H1 (cell line): ENCODE measurements at regions of chr10 and their contacts with region 1.

Region 1: GRCh38 chr10:97278491-97278989 is 13.9 kb downstream of the ARHGAP19 start:
- DNase-seq: no peak
- H3K4me3 ChIP-seq: no peak overlapping the region
- H3K27ac ChIP-seq: no peak overlapping the region
- H3K4me1 ChIP-seq: no peaks in the 10 kb centered on the region
- H3K27me3 ChIP-seq: no peaks in the 10 kb centered on the region
- CTCF ChIP-seq: peak in 1 of 3 experiments; percentile 37; a peak in 2 of 4 replicates
- EP300 ChIP-seq: no peak
- POLR2A ChIP-seq: no peak
- RAD21 ChIP-seq: peak; percentile 40 to 43

Region 2: GRCh38 chr10:96960872-96961271 is 317.7 kb before region 1 on chr10:
- CTCF ChIA-PET with region 1: no interaction called
- POLR2A ChIA-PET with region 1: no interaction called
- DNase-seq: no peak
- H3K4me3 ChIP-seq: no peak overlapping the region
- H3K27ac ChIP-seq: no peak overlapping the region
- H3K4me1 ChIP-seq: no peaks in the 10 kb centered on the region
- H3K27me3 ChIP-seq: no peaks in the 10 kb centered on the region
- CTCF ChIP-seq: no peak
- EP300 ChIP-seq: no peak
- POLR2A ChIP-seq: no peak
- RAD21 ChIP-seq: no peak

Region 3: DNA sequence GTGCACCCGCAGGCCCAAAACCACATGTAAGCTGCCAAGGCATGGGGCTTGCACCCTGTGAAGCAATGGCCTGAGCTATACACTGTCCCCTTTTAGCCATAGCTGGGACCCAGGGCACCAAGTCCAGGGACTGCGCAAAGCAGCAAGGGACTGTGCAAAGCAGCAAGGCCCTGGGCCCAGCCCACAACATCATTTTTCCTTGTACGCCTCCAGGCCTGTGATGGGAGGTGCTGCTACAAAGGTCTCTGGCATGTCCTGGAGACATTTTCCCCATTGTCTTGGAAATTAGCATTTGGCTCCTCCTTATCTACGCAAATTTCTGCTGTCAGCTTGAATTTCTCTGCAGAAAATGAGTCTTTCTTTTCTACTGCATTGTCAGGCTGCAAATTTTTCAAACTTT is 10.9 kb before region 1 on chr10:
- CTCF ChIA-PET with region 1: interaction called, 30 read pairs
- POLR2A ChIA-PET with region 1: interaction called, 5 read pairs
- DNase-seq: no peak
- H3K4me3 ChIP-seq: no peak overlapping the region
- H3K27ac ChIP-seq: no peak overlapping the region
- H3K4me1 ChIP-seq: peaks cover 3 to 7% (median 3%) of the 10 kb centered on the region in 4 experiments; a peak in 6 of 7 replicates
- H3K27me3 ChIP-seq: no peaks in the 10 kb centered on the region
- CTCF ChIP-seq: no peak
- EP300 ChIP-seq: no peak
- POLR2A ChIP-seq: no peak
- RAD21 ChIP-seq: no peak

Region 4: DNA sequence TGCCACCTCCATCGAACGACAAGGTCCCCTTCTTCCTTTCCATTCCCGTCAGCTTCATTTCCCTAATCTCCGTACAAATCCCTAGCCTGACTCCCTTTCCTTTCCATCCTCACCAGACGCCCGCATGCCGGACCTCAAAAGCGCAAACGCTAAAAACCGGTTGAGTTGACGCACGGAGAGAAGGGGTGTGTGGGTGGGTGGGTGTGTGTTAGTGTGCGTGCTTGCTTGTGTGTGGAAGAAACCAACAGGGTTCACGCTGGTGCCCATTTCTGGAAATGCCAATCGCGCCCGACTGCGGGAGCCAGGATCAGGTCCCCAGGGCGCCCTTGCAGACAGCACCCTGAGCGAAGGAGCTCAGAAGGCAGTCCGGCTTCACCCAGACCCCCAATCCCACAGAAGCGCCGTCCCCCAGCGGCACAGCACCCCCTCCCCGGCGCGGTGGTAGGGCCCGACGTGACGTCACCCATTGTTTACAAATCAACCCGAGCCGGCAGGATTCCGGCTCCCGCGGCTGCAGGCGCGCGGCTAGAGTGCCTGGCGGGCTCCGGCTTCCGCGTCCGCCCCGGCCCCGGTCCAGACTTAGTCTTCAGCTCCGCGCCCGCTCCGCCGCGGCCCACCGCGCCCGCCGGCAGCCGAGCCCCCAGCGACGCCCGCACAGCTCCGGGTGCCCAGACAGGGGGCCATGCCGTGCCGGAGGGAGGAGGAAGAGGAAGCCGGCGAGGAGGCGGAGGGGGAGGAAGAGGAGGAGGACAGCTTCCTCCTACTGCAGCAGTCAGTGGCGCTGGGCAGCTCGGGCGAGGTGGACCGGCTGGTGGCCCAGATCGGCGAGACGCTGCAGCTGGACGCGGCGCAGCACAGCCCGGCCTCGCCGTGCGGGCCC is 40.5 kb after region 1 on chr10 and contains the start of gene FRAT1:
- CTCF ChIA-PET with region 1: interaction called, 14 read pairs
- POLR2A ChIA-PET with region 1: no interaction called
- DNase-seq: peak; percentile 65 to 95
- H3K4me3 ChIP-seq: peak within 1 kb of the TSS; percentile 45 to 79 (median 70)
- H3K27ac ChIP-seq: peak within 1 kb of the TSS; percentile 100
- H3K4me1 ChIP-seq: peaks cover 0 to 15% (median 12%) of the 10 kb centered on the region in 4 experiments; a peak in 6 of 7 replicates
- H3K27me3 ChIP-seq: peaks cover 6 to 23% (median 20%) of the 10 kb centered on the region in 4 experiments
- CTCF ChIP-seq: no peak
- EP300 ChIP-seq: peak in 1 of 2 experiments; percentile 97; a peak in 2 of 3 replicates
- POLR2A ChIP-seq: peak in 1 of 2 experiments; percentile 50; a peak in 1 of 3 replicates
- RAD21 ChIP-seq: no peak
- total RNA-seq, gene FRAT1: 4.8 and 5.2 TPM in 2 replicates

Region 5: GRCh38 chr10:97349752-97350513 is 71.4 kb after region 1 on chr10:
- CTCF ChIA-PET with region 1: interaction called, 45 read pairs
- POLR2A ChIA-PET with region 1: no interaction called
- DNase-seq: no peak
- H3K4me3 ChIP-seq: no peak overlapping the region
- H3K27ac ChIP-seq: no peak overlapping the region
- H3K4me1 ChIP-seq: peaks cover 0 to 8% (median under 1%) of the 10 kb centered on the region in 4 experiments; a peak in 1 of 7 replicates
- H3K27me3 ChIP-seq: no peaks in the 10 kb centered on the region
- CTCF ChIP-seq: no peak
- EP300 ChIP-seq: no peak
- POLR2A ChIP-seq: no peak
- RAD21 ChIP-seq: no peak

Region 6: GRCh38 chr10:97361537-97361901 is 83.0 kb after region 1 on chr10:
- CTCF ChIA-PET with region 1: interaction called, 45 read pairs
- POLR2A ChIA-PET with region 1: no interaction called
- DNase-seq: no peak
- H3K4me3 ChIP-seq: no peak overlapping the region
- H3K27ac ChIP-seq: no peak overlapping the region
- H3K4me1 ChIP-seq: no peaks in the 10 kb centered on the region
- H3K27me3 ChIP-seq: no peaks in the 10 kb centered on the region
- CTCF ChIP-seq: no peak
- EP300 ChIP-seq: no peak
- POLR2A ChIP-seq: no peak
- RAD21 ChIP-seq: 0 out of 4 replicates have a peak, but pooled peaks of 1 of the 2 experiments have one; percentile 4